Activated CD8-positive, alpha-beta T cell treated with anti-CD3 and anti-CD28 coated beads for 36 hours (primary cell): ENCODE measurements at regions of chr5 and their contacts with region 1.

Region 1: GRCh38 chr5:176660860-176661641 is 13.8 kb downstream of the TSPAN17 start:
- DNase-seq: peak; percentile 85
- ATAC-seq: peak; percentile 81
- H3K4me3 Mint-ChIP-seq: no peak overlapping the region
- H3K27ac Mint-ChIP-seq: no peak overlapping the region
- H3K4me1 Mint-ChIP-seq: peaks cover 30% of the 10 kb centered on the region
- H3K27me3 Mint-ChIP-seq: peaks cover 7% of the 10 kb centered on the region
- CTCF ChIP-seq: peak; percentile 88

Region 2: DNA sequence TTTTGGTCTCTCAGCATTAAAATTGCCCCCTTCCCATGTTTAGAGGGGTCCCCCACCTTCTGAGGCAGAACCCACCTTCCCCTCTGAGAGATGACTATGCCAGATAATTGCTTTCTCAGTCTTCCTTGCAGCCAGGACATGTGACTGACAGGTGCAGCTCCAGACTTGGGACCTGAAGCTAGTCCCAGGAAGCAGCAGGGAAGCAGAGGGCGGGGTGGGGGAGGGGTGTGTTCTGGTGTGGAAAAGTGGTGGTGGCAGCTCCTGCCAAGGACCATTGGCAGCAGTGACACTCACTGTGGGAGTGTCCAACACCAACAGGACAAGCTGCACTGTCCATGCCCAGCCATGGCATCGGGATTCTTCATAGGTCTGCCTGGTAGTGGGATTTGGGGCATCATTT is 28.3 kb before region 1 on chr5:
- CTCF ChIA-PET with region 1: interaction called, 19 read pairs
- POLR2A ChIA-PET with region 1: interaction called, 4 read pairs
- intact Hi-C with region 1: no loop called
- DNase-seq: no peak
- ATAC-seq: no peak
- H3K4me3 Mint-ChIP-seq: no peak overlapping the region
- H3K27ac Mint-ChIP-seq: no peak overlapping the region
- H3K4me1 Mint-ChIP-seq: peaks cover 17% of the 10 kb centered on the region
- H3K27me3 Mint-ChIP-seq: peaks cover 59% of the 10 kb centered on the region
- CTCF ChIP-seq: no peak

Region 3: GRCh38 chr5:176675675-176676360 is 14.8 kb after region 1 on chr5:
- CTCF ChIA-PET with region 1: interaction called, 17 read pairs
- POLR2A ChIA-PET with region 1: no interaction called
- intact Hi-C with region 1: no loop called
- DNase-seq: no peak
- ATAC-seq: no peak
- H3K4me3 Mint-ChIP-seq: no peak overlapping the region
- H3K27ac Mint-ChIP-seq: no peak overlapping the region
- H3K4me1 Mint-ChIP-seq: no peaks in the 10 kb centered on the region
- H3K27me3 Mint-ChIP-seq: peaks cover 38% of the 10 kb centered on the region
- CTCF ChIP-seq: no peak

Region 4: DNA sequence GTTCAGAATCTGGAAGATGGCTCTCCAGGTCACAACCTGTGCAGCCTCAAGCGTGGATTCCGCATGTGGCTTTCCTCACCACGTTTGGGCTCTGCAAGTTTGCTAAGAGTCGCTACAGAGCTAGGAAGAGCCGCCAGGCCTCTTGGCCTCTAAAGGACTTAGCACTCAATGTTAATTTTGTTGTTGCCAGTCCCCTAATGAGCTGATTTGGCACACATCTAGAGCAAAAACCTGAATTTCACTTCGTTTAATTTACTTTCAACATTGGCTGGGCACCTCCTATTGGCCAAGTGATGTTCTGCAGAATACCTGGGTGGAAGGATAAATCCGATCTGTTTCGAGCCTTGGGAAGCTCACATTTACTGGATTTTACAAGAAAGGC is 83.5 kb after region 1 on chr5:
- CTCF ChIA-PET with region 1: interaction called, 14 read pairs
- POLR2A ChIA-PET with region 1: interaction called, 3 read pairs
- intact Hi-C with region 1: no loop called
- DNase-seq: no peak
- ATAC-seq: no peak
- H3K4me3 Mint-ChIP-seq: no peak overlapping the region
- H3K27ac Mint-ChIP-seq: no peak overlapping the region
- H3K4me1 Mint-ChIP-seq: peaks cover 19% of the 10 kb centered on the region
- H3K27me3 Mint-ChIP-seq: peaks cover 76% of the 10 kb centered on the region
- CTCF ChIP-seq: peak; percentile 38

Region 5: GRCh38 chr5:176772271-176773210 is 111.5 kb after region 1 on chr5:
- CTCF ChIA-PET with region 1: interaction called, 10 read pairs
- POLR2A ChIA-PET with region 1: no interaction called
- intact Hi-C with region 1: no loop called
- DNase-seq: no peak
- ATAC-seq: no peak
- H3K4me3 Mint-ChIP-seq: no peak overlapping the region
- H3K27ac Mint-ChIP-seq: no peak overlapping the region
- H3K4me1 Mint-ChIP-seq: no peaks in the 10 kb centered on the region
- H3K27me3 Mint-ChIP-seq: peaks cover 33% of the 10 kb centered on the region
- CTCF ChIP-seq: no peak

Region 6: DNA sequence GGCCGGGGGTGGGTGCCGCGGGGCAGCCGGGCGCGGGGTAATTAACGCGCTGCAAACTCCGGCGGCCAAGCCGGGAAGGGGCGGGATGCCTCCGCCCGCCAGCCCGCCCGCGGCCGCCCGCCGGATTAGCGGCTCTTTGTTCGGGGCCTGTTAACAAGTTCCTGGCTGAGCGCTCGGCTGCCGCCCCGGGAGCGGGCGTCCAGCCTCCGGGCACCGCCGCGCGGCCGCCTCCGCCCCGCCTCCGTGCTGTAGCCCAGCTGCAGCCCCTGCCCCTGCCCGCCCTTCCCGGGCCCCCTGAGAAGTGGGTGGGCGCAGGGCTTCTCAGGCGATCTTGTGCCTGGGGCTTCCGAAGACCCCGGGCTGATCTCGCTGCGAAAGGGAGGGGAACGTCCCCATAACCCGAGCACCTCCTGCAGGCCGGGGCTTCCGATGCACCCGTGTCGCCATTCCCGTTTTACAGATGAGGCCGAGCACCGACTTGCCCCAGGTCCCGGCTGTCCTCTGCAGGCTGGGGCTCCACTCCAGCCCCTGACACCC is 156.9 kb after region 1 on chr5:
- CTCF ChIA-PET with region 1: interaction called, 33 read pairs
- POLR2A ChIA-PET with region 1: no interaction called
- intact Hi-C with region 1: no loop called
- DNase-seq: peak; percentile 49
- ATAC-seq: peak; percentile 50
- H3K4me3 Mint-ChIP-seq: peak overlapping the region; percentile 49
- H3K27ac Mint-ChIP-seq: no peak overlapping the region
- H3K4me1 Mint-ChIP-seq: peaks cover 12% of the 10 kb centered on the region
- H3K27me3 Mint-ChIP-seq: peaks cover 66% of the 10 kb centered on the region
- CTCF ChIP-seq: peak; percentile 21

Region 7: GRCh38 chr5:176908675-176909368 is 247.8 kb after region 1 on chr5:
- CTCF ChIA-PET with region 1: interaction called, 10 read pairs
- POLR2A ChIA-PET with region 1: no interaction called
- intact Hi-C with region 1: no loop called
- DNase-seq: no peak
- ATAC-seq: no peak
- H3K4me3 Mint-ChIP-seq: no peak overlapping the region
- H3K27ac Mint-ChIP-seq: no peak overlapping the region
- H3K4me1 Mint-ChIP-seq: peaks cover 13% of the 10 kb centered on the region
- H3K27me3 Mint-ChIP-seq: no peaks in the 10 kb centered on the region
- CTCF ChIP-seq: no peak